Cardiac septum (tissue), 1 donor: ENCODE measurements at regions of chr1 and their contacts with region 1.

Region 1: DNA sequence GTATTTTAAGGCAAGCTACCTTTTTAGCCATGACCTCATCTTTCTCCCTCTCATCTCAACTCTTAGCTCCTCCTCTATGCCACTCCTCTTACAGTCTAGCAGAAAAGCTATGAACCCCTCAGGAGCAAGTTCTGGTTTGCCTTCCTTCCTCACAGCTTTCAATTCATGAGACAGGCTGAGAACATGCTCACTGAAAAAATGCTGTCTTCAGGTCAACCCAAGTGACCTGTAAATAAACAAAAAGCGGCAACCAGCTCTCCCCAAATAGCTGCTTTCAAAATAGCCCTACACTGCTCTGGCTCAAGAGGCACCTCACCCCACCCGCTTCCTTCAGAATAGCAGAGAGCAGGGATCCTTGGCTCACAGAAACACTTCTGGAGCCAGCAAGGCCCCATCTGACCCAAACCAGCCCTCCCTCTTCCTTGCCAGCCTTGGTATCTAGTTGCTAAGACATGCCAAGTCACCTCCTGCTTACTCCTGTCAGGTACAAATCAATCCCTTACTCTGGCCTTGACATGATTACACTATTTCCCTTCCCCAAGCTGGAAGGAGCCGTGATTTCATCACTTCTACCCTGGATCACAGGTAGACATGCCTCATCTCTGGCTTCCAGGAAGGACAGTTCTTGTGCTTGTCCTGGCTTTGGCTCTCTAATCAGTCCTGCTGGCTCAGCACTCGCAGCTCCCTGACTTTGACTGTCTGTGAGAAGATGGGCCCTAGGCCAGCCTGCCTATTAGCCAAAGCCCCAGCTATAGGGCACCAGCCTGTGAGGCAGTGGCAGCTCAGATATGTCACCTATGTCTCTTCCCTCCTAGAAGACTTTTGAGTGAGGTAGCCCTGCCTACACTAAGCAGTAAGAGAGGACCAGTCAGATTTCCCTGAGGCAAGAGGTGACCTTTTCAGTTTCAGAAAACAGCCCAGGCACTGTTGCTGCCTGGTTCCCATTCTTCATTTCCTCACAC is 8.8 kb upstream of the MUTYH start:
- DNase-seq: no peak

Region 2: DNA sequence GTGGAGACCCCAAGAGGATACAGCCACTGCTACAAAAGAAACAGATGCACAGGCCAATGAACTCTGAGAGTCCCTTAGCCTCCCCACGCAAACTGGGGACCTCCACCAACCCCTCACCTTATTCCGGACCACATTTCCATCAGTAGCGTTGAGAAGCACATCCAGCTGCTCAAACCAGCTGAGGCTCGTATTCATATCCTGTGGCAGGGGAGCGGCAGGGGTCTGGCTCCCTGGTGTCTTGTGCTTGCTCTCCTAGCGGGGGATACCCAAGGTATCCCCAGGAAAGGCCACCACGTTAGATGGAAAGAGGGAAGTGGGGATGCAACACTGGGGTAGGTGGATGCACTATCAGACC is 150.4 kb after region 1 on chr1:
- intact Hi-C with region 1: loop called (anchors 5 kb)
- DNase-seq: no peak